ENCODE measurements at regions of chr12 and their contacts with region 1.

Region 1: GRCh38 chr12:24754690-24755638 is 193.9 kb downstream of the BCAT1 start:
- DNase-seq: peak; percentile 93
- H3K4me3 ChIP-seq: no peak overlapping the region
- H3K27ac ChIP-seq: peak overlapping the region; percentile 54
- H3K4me1 ChIP-seq: peaks cover 37% of the 10 kb centered on the region
- H3K27me3 ChIP-seq: no peaks in the 10 kb centered on the region
- CTCF ChIP-seq: no peak

Region 2: GRCh38 chr12:24608637-24609285 is 146.2 kb before region 1 on chr12:
- CTCF ChIA-PET with region 1: interaction called, 14 read pairs
- dilution Hi-C with region 1: no loop called
- in situ Hi-C with region 1: no loop called
- intact Hi-C with region 1: no loop called
- DNase-seq: no peak
- H3K4me3 ChIP-seq: no peak overlapping the region
- H3K27ac ChIP-seq: no peak overlapping the region
- H3K4me1 ChIP-seq: no peaks in the 10 kb centered on the region
- H3K27me3 ChIP-seq: no peaks in the 10 kb centered on the region
- CTCF ChIP-seq: no peak

Region 3: DNA sequence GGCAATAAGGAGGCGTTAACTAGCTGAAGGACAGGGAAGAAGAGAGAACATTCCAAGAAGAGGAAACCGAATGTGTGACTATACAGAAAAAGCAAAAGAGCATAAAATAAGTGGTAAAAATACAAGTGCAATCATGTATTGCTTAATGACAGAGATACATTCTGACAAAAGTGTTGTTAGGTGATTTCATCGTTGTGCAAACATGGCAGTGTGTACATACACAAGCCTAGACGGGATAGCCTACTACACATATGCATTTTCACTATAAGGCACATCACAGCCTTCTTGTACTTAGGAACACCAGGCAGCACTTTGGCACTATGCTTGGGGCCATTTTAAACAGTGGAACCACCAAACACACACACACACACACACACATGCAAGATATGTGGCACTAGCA is 105.3 kb before region 1 on chr12:
- CTCF ChIA-PET with region 1: no interaction called
- dilution Hi-C with region 1: no loop called
- in situ Hi-C with region 1: no loop called
- intact Hi-C with region 1: no loop called
- DNase-seq: no peak
- H3K4me3 ChIP-seq: no peak overlapping the region
- H3K27ac ChIP-seq: no peak overlapping the region
- H3K4me1 ChIP-seq: no peaks in the 10 kb centered on the region
- H3K27me3 ChIP-seq: peaks cover 3% of the 10 kb centered on the region
- CTCF ChIP-seq: no peak

Region 4: DNA sequence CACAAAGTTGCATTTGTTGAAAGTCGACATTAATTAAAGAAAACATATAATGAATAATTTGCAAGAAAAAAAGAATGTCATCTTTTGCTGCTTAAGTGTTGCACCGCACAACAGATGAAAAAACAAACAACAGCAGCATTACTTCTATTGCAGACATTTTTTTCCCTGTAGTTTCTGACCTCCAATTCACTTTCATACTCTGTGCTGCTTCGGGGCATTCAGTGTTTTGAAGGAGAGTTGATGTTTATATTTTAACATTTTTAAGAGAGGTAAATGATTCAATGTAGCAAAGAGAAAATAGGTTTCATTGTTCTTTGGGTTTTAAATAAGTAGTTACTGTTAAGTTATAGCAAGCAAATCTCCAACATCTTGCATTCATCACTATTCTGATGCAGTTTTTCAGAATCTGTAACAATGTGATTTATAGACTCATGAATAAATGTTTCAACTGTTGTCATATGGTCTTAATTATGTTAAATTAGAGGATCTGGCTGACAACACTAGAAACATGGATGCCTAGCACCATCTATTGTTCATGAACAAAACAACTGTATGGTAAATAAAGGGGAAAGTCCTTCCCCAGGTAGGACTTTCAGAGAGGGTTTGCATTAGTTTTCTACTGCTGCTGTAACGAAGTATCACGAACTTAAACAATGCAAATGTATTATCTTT is 25.9 kb after region 1 on chr12:
- CTCF ChIA-PET with region 1: no interaction called
- dilution Hi-C with region 1: no loop called
- in situ Hi-C with region 1: no loop called
- intact Hi-C with region 1: no loop called
- DNase-seq: peak; percentile 4
- H3K4me3 ChIP-seq: no peak overlapping the region
- H3K27ac ChIP-seq: no peak overlapping the region
- H3K4me1 ChIP-seq: no peaks in the 10 kb centered on the region
- H3K27me3 ChIP-seq: peaks cover 2% of the 10 kb centered on the region
- CTCF ChIP-seq: peak; percentile 24 to 37